Activated CD4-positive, alpha-beta T cell treated with anti-CD3 and anti-CD28 coated beads, Interleukin-2, amount 10 ng/mL, durations not matched to agents 7 days and 5 days (primary cell): ENCODE measurements at regions of chr6 and their contacts with region 1.

Region 1: DNA sequence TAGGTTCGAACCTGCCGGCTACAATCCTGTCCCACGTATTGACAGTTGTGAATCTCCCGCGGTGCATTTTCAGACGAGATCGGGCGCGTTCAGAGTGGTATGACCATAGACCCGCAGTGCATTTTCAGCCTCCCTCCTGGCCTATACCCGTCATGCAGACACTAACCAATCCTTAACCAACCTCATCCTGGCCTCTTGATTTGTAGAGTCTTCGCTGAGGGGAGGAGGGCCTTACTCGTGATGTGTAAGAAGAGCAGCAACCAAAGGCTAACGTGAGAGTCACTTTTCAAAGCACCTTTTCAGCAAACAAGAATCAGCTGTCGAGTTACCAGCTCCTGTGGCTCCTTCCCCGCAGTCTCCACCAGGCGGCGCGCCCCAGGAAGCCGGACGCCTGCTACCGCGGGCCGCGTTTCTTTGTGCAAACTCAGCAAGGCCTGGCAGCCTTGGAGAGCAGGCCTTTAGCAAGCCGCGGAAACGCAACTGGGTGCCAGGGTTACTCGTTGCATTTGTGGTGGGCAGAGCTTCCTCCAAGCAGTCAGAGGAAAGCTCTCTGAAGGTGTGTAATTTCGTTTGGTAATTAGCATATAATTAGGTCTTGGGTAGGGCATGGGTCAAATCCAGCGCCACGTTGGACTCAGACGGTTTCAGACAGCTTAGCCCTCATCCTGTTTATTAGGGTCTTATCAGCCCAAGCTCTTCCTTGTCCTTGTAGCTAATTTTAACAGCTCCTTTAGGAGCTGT is 139.8 kb downstream of the OR2B2 start:
- DNase-seq: peak; percentile 90
- H3K4me3 Mint-ChIP-seq: no peak overlapping the region
- H3K27ac Mint-ChIP-seq: peak overlapping the region; percentile 51
- H3K4me1 Mint-ChIP-seq: peaks cover 18% of the 10 kb centered on the region
- H3K27me3 Mint-ChIP-seq: peaks cover 6% of the 10 kb centered on the region

Region 2: GRCh38 chr6:27753668-27754407 is 18.6 kb before region 1 on chr6:
- CTCF ChIA-PET with region 1: interaction called, 25 read pairs
- POLR2A ChIA-PET with region 1: interaction called, 11 read pairs
- DNase-seq: peak; percentile 83
- H3K4me3 Mint-ChIP-seq: peak overlapping the region; percentile 90
- H3K27ac Mint-ChIP-seq: peak overlapping the region; percentile 98
- H3K4me1 Mint-ChIP-seq: peaks cover 46% of the 10 kb centered on the region
- H3K27me3 Mint-ChIP-seq: peaks cover 5% of the 10 kb centered on the region

Region 3: GRCh38 chr6:27761391-27761790 is 11.0 kb before region 1 on chr6:
- CTCF ChIA-PET with region 1: interaction called, 25 read pairs
- POLR2A ChIA-PET with region 1: interaction called, 11 read pairs
- DNase-seq: peak; percentile 38
- H3K4me3 Mint-ChIP-seq: peak overlapping the region; percentile 88
- H3K27ac Mint-ChIP-seq: peak overlapping the region; percentile 99
- H3K4me1 Mint-ChIP-seq: peaks cover 48% of the 10 kb centered on the region
- H3K27me3 Mint-ChIP-seq: no peaks in the 10 kb centered on the region

Region 4: DNA sequence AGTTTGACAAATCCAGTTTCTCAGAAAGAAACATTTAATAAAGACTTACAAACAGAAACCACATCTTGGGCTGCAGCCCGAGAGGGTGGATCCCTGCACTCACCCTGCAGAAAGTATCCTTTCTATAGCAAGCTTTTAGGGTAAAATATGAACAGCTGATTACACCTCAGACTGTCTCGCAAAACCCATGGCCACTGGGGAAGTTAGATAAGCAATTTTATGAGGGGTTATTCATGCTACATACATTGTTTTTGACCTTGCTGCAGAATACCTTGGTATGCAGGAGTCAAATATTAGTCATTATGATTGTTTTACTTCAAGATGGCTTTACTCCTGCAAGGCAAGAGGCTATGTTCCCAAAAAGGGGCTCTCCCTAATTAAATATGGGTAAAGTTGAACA is 12.9 kb after region 1 on chr6:
- CTCF ChIA-PET with region 1: interaction called, 37 read pairs
- POLR2A ChIA-PET with region 1: no interaction called
- DNase-seq: no peak
- H3K4me3 Mint-ChIP-seq: no peak overlapping the region
- H3K27ac Mint-ChIP-seq: no peak overlapping the region
- H3K4me1 Mint-ChIP-seq: peaks cover 3% of the 10 kb centered on the region
- H3K27me3 Mint-ChIP-seq: peaks cover 31% of the 10 kb centered on the region

Region 5: DNA sequence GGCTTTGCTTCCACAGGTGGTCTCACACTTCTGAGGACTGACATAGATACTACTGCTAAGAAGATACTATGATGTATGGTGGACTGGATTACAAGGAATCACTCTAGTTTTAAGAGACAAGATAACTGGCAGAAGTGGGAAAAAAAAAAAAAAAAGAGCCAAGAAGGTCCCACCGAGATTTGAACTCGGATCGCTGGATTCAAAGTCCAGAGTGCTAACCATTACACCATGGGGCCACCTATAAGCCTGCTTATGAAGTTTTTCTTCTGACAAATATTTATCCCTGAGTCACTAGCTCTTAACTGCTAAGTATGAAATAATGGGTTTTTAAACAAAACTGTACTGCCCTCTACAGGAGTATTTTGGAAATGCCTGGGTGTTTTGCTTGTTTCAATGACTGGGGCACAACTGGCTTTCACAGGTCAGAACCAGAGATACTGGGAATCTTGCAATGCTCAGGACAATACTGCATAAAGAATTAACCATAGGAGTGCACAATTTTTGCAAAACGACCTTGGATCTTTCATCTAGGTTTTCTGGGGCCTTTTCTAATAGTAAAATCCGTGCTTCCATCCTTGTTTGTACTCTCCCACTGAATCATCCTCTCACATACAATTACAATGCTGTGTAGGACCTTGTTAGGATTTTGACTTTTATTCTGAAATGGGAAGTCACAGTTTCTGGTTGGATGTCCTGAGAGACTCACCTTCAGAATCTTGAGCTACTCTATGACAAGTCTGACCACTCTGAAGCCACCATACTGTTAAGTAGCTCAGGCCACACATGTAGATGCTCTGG is 23.5 kb after region 1 on chr6:
- CTCF ChIA-PET with region 1: interaction called, 20 read pairs
- POLR2A ChIA-PET with region 1: no interaction called
- DNase-seq: peak; percentile 82
- H3K4me3 Mint-ChIP-seq: no peak overlapping the region
- H3K27ac Mint-ChIP-seq: no peak overlapping the region
- H3K4me1 Mint-ChIP-seq: peaks cover 47% of the 10 kb centered on the region
- H3K27me3 Mint-ChIP-seq: peaks cover 18% of the 10 kb centered on the region

Region 6: DNA sequence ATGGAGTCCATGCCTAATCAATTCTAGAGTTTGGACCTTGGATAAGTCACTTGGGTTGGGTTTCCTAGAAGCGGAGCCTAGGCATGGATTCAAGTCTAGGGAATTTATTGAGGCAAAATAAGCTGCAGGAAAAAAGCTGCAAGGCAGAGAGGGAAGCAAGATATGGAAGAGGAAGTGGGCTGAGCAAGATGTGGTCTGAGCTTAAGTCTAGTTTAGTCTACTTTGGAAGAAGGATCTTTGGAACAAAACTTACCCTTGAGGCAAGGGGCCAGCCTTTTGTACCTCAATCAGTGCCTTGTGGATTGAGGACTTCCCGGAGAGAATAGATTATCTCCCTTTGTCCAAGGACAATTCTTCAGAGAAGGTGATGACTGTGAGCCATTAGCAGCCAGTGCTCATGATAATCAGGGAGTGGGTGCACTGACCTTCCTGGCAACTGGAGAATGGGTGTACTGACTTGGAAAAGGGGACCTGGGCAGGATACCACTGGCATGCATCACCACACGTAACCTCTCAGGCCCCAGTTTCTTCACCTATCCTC is 463.6 kb after region 1 on chr6:
- CTCF ChIA-PET with region 1: no interaction called
- POLR2A ChIA-PET with region 1: no interaction called
- DNase-seq: no peak
- H3K4me3 Mint-ChIP-seq: no peak overlapping the region
- H3K27ac Mint-ChIP-seq: no peak overlapping the region
- H3K4me1 Mint-ChIP-seq: no peaks in the 10 kb centered on the region
- H3K27me3 Mint-ChIP-seq: no peaks in the 10 kb centered on the region